AG04449 (cell line): ENCODE measurements at regions of chr1 and their contacts with region 1.

Region 1: DNA sequence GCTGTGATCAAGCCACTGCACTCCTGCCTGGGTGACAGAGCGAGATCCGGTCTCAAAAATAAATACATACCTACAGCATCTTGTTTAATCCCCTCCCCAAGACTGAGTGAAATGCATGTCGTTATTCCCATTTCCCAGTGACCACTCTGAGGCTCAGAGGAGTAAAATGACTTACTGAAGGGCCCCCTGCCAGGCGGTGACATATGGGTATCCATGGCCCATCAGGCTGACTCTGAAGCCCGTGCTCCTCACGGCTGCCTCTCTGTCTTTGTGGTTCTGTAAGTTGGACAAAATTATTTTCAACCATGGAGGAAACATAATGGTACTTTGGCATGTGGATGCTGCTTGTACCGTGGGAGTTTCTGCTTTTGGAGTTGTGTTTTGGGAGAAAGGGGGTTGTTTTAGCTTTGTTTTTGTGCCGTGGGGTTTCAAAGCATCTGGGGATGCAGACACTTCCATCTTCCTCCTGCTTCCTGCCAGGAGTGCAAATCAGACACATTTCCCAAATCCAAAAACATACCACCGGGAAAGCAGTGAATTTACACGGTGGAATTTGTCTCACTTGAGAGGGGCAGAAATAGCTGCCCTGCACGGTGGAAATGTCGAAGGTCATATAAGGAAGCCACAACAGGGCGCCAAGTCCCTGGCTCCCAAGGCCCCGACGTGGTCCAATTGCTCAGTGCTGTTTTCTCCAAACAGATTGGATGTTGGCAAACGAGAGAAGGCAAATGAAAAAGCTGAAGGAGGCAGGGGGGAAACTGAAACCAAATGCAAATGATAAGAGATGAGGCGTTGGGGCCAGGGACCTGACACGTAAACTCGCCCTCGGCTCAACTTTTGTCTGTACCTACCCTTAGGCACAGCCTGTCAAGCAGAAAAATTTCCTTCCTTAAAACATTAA is 17.1 kb upstream of the PINK1 start:
- DNase-seq: no peak
- H3K4me3 ChIP-seq: no peak overlapping the region
- CTCF ChIP-seq: no peak

Region 2: GRCh38 chr1:20115479-20115878 is 500.7 kb before region 1 on chr1:
- CTCF ChIA-PET with region 1: no interaction called
- POLR2A ChIA-PET with region 1: no interaction called
- DNase-seq: no peak
- H3K4me3 ChIP-seq: no peak overlapping the region
- CTCF ChIP-seq: no peak

Region 3: GRCh38 chr1:20603527-20604464 is 12.4 kb before region 1 on chr1:
- CTCF ChIA-PET with region 1: interaction called, 5 read pairs
- POLR2A ChIA-PET with region 1: interaction called, 13 read pairs
- DNase-seq: peak; percentile 84
- H3K4me3 ChIP-seq: no peak overlapping the region
- CTCF ChIP-seq: no peak

Region 4: DNA sequence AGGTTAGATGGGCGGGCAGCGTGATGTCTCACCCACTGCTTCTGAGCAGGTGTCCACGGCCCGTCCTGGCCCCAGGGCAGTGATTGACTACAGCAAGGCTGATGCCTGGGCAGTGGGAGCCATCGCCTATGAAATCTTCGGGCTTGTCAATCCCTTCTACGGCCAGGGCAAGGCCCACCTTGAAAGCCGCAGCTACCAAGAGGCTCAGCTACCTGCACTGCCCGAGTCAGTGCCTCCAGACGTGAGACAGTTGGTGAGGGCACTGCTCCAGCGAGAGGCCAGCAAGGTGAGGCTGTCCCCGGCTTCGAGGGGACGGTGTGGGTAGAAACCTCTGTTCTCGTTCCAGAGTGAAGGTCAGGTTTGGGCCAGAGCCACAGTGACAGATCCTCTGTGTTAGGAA is 32.8 kb after region 1 on chr1:
- CTCF ChIA-PET with region 1: no interaction called
- POLR2A ChIA-PET with region 1: no interaction called
- DNase-seq: no peak
- H3K4me3 ChIP-seq: no peak overlapping the region
- CTCF ChIP-seq: no peak

Region 5: DNA sequence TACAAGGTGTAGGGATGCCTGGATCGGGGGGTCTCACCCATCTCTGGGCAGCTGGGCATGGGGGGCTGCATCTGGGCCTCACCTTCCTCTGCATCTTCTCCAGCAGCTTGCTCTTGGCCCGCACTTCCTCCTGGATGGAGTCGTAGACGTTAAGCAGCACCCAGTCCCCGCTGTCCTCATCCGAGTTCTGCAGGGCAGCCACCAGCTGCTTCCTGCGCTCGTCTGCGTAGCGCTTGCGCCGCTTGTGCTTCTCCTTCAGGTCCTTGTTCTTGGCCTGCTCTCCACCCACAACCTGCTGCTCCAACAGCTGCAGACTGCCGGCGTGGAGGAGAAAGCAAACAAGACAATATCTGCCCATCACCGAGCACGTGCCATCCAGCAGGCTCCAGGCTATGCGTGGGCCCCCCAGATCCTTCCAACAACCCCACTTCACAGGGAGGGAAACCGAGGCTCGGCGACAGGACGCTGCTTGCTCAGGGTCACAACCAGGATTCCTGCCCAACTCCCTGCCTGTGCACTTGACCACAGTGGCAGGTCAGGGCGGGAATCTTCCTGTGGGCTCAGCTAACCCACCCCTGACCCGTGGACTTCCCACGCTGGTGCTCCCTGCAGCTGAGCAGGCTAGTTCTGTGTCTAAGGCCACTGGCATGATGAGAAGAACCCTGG is 66.5 kb after region 1 on chr1:
- CTCF ChIA-PET with region 1: no interaction called
- POLR2A ChIA-PET with region 1: no interaction called
- DNase-seq: no peak
- H3K4me3 ChIP-seq: no peak overlapping the region
- CTCF ChIP-seq: no peak